ENCODE measurements at regions of chr15 and their contacts with region 1.

Region 1: DNA sequence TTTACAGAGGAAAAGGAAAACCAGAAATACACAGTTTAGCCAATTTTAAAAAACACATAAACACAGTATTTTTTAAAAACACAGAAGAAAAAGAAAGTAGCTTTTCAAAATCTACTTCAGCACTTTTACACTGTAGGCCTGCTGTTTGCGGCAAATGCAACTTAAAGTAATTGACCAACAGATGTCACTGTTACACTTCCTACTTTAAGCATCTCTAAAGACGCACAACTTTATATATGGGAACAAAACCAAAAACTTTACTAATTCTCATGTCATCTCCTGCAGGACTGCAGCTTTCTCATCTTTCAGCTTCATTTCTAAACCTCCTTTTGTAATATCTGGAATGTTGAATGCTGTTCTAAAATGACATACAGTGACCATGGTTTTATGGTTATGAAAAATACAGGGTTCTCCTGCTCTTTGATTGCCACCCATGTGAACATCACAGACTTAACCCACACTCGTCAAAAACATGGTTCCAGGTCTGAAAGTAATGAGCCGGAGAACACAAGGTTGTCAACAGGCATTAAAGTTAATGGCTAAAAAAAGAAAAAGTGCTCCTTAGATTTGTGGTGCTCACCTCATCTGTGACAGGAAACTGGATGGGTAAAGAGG is 107.9 kb downstream of the FMN1 start:
- DNase-seq: no peak
- H3K4me3 Mint-ChIP-seq: no peak overlapping the region
- H3K27ac Mint-ChIP-seq: no peak overlapping the region
- H3K4me1 Mint-ChIP-seq: no peaks in the 10 kb centered on the region
- H3K27me3 Mint-ChIP-seq: peaks cover 4% of the 10 kb centered on the region

Region 2: GRCh38 chr15:33111041-33111451 is 24.4 kb after region 1 on chr15:
- intact Hi-C with region 1: no loop called
- DNase-seq: no peak
- H3K4me3 Mint-ChIP-seq: no peak overlapping the region
- H3K27ac Mint-ChIP-seq: no peak overlapping the region
- H3K4me1 Mint-ChIP-seq: no peaks in the 10 kb centered on the region
- H3K27me3 Mint-ChIP-seq: peaks cover 9% of the 10 kb centered on the region

Region 3: GRCh38 chr15:33132722-33133345 is 46.2 kb after region 1 on chr15:
- intact Hi-C with region 1: loop called (anchors 1 kb)
- DNase-seq: no peak
- H3K4me3 Mint-ChIP-seq: no peak overlapping the region
- H3K27ac Mint-ChIP-seq: no peak overlapping the region
- H3K4me1 Mint-ChIP-seq: no peaks in the 10 kb centered on the region
- H3K27me3 Mint-ChIP-seq: peaks cover 4% of the 10 kb centered on the region

Region 4: DNA sequence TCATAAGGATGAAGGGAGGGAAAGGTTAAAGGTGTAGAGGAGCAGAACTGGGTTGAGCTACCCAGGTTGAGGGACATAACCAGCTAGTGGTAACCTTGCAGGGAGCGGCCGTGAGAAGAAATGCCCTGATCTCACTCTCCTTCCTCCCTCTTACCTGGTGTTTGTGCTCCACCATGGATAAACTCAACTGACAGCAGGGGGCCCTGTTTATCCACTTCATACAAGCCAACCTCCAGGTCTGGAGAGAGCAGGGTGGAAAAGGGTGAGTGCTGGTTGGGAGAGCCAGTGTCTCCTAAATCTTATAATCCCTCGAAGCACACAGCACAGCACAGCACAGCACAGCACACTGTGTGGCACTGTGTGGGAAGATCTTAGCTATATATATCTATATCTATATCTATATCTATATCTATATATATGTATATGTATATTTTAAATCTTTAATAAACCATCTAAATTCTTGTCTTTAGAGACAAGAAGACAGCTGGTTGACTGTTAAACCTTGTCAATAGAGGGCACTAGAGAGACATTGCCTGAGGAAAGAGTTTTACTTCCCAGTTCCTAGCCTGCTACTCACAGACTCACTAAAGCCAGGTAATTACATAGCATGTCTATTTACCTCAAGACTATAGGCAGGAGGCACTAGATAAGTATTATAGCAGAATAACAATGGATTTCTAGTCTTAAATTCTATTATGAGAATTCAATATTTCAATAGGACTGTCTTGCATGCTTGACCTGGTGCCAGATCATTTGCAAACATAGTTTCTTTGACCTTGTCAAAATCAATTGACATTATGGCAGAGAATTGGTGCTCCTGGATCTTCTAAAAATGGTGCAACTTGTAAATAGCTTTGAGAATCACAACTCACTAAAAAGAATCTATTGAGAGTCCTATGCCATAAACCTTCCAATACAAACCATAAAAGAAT is 129.6 kb after region 1 on chr15:
- intact Hi-C with region 1: loop called (anchors 2 kb)
- DNase-seq: no peak
- H3K4me3 Mint-ChIP-seq: no peak overlapping the region
- H3K27ac Mint-ChIP-seq: no peak overlapping the region
- H3K4me1 Mint-ChIP-seq: no peaks in the 10 kb centered on the region
- H3K27me3 Mint-ChIP-seq: peaks cover 7% of the 10 kb centered on the region

Region 5: GRCh38 chr15:33292717-33293307 is 206.2 kb after region 1 on chr15:
- intact Hi-C with region 1: loop called (anchors 1 kb)
- DNase-seq: no peak
- H3K4me3 Mint-ChIP-seq: no peak overlapping the region
- H3K27ac Mint-ChIP-seq: no peak overlapping the region
- H3K4me1 Mint-ChIP-seq: no peaks in the 10 kb centered on the region
- H3K27me3 Mint-ChIP-seq: peaks cover 1% of the 10 kb centered on the region

Region 6: DNA sequence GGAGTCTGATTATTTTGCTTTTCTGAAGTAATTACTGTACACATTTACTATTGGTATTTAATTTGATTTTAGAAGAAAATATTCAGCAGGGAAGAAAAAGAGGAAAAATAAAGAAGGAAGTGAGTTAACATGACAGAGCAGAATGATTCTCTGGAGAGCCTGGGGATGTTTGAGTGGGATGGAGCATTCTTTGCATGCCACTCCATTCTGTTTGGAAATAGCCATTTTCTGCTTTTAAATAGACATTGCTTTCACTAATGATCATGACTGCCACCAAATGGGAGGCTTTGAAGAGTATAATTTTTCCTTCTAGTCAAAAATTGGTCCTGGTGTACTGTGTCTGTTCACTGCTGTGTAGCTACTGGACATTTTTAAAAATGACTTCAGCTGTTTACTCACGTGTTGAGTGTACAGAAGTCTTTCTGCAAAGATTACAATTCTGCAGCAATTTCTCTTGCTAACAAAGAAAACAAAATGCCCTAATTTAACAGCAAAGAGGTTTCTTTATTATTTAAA is 420.2 kb after region 1 on chr15:
- intact Hi-C with region 1: loop called (anchors 10 kb)
- DNase-seq: no peak
- H3K4me3 Mint-ChIP-seq: no peak overlapping the region
- H3K27ac Mint-ChIP-seq: no peak overlapping the region
- H3K4me1 Mint-ChIP-seq: no peaks in the 10 kb centered on the region
- H3K27me3 Mint-ChIP-seq: no peaks in the 10 kb centered on the region

Region 7: GRCh38 chr15:33700695-33701304 is 614.2 kb after region 1 on chr15:
- intact Hi-C with region 1: loop called (anchors 1 kb)
- DNase-seq: peak; percentile 12
- H3K4me3 Mint-ChIP-seq: no peak overlapping the region
- H3K27ac Mint-ChIP-seq: no peak overlapping the region
- H3K4me1 Mint-ChIP-seq: no peaks in the 10 kb centered on the region
- H3K27me3 Mint-ChIP-seq: peaks cover 2% of the 10 kb centered on the region